ENCODE measurements at regions of chr1 and their contacts with region 1.

Region 1: GRCh38 chr1:112955781-112956543 is at the start of gene SLC16A1:
- DNase-seq: peak; percentile 91 to 99 (median 93)

Region 2: GRCh38 chr1:112625696-112626095 is 330.3 kb before region 1 on chr1:
- intact Hi-C with region 1: no loop called
- DNase-seq: peak in 1 of 10 donors; percentile 39

Region 3: DNA sequence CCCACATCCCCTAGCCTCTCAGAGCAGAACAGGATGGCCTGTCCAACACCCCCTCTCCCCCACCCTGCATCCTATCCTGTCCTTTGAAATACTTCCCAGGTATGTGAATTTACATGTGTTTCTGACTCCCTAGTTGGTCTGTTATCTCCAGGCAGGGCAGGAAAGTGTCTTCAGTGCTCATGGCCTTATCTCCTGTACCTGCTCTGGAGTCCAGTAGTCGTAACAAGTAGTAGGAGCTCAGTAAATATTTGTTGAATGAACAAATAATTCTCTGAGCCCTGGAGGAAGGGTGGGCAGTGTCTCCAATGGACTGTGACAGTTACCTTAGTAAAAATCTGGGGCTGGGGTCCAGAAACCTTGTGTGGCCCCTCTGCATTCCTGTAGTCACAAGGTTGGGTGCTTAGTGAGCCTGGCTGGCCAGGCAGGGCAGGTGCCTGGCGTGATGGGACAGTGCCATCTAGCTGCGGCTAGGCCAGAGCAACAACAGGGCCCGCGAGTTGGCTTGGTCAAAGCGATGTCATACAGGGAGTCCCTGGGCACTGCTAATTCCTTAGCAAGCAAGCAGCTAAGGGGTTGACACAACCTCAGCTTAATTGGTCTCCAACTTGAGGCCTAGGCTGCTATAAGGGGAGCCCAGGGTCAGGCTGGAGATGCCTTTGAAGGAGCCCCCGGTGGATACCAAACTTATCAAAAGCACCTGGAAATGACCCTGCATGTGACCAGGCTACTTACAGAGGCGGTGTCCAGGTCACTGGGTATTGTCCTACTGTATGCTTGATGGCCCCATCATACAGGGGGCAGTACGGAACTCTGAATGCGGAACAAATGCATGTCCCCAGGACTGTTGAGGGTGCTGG is 151.8 kb before region 1 on chr1:
- intact Hi-C with region 1: loop called (anchors 10 kb)
- DNase-seq: peak; percentile 57 to 97 (median 76)

Region 4: DNA sequence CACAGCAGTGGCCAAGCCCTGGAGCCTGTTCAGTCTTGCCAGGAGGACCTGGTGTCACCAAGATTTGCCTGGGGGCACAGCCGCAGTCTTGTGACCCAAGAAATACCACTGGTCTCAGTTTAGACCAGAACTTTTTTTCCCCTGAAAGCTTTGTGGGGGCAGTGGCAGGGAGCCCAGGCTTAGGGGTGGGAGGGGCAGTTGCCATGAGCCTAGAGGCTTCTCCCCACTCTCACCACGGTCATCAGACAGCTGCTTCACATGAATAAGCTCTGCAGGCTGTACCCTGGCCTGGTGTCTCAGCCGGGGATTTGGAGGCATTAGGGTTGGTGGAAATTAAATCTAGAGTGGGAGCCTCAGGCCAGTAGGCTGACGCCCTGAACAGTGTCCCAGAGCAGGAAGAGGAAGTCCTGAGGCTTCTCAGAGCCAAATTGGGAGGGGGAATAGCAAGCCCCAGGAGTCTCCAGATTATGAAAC is 73.7 kb before region 1 on chr1:
- intact Hi-C with region 1: loop called (anchors 1 kb)
- DNase-seq: peak in 3 of 10 donors; percentile 13 to 86 (median 83)

Region 5: GRCh38 chr1:113042285-113043143 is 86.6 kb after region 1 on chr1:
- intact Hi-C with region 1: loop called (anchors 2 kb)
- DNase-seq: peak; percentile 53 to 96 (median 76)

Region 6: GRCh38 chr1:113178522-113178921 is 222.6 kb after region 1 on chr1:
- intact Hi-C with region 1: no loop called
- DNase-seq: no peak

Measured in posterior cingulate gyrus (tissue), 11 donors.